ENCODE measurements at regions of chr7 and their contacts with region 1.

Region 1: DNA sequence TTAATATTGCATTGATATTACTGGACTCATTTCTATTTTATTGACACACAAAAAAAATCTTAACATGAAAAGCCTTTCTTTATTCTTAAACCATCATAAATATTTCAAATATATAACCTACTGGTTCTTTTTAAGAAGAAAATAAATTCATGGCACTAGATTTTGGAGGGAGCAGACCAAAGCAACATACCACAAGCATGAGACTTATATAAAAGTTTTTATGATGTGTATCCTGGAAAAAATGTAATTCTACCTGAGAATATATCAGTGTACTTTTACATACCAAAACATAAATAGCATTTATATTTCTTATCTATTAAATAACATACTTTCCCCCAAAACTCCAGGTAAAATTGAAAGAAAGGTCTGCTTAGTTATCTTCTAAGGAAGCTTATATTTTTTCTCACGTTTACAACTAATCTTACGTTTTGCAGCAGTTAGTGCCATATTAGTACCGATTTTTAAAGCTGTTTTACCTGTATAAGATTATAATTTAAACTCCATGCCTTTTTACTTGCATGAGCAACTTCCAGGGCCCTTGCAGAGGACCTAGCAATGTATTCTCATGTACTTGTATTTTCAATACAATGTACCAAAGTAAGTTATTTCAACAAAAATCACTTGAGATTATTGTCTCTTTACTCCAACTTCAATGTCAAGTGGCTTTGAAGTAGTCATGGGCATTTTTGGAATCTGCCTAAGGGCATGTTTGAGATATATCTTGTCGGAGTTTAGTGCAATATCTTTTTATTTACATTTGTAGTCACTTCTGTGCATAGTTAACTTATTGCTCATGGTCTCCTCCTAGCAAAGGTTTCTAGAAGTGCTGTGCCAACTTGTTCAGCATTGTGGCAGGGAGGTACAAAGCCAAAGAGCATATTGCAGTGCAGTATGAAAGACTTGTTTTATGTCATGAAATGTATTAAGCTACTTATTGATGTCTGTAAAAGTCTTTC is 508.5 kb upstream of the SEMA3D start:
- DNase-seq: peak; percentile 31 to 64
- H3K4me3 ChIP-seq: no peak overlapping the region
- H3K27ac ChIP-seq: no peak overlapping the region
- H3K4me1 ChIP-seq: peaks cover 13% of the 10 kb centered on the region
- H3K27me3 ChIP-seq: no peaks in the 10 kb centered on the region
- CTCF ChIP-seq: no peak

Region 2: GRCh38 chr7:87219545-87220025 is 1524.3 kb after region 1 on chr7 and contains the start of gene TMEM243:
- CTCF ChIA-PET with region 1: no interaction called
- POLR2A ChIA-PET with region 1: no interaction called
- intact Hi-C with region 1: loop called (anchors 5 kb)
- DNase-seq: peak; percentile 57 to 64
- H3K4me3 ChIP-seq: peak within 1 kb of the TSS; percentile 94
- H3K27ac ChIP-seq: peak within 1 kb of the TSS; percentile 36
- H3K4me1 ChIP-seq: peaks cover 20% of the 10 kb centered on the region
- H3K27me3 ChIP-seq: no peaks in the 10 kb centered on the region
- CTCF ChIP-seq: no peak
- total RNA-seq, gene TMEM243: 24.6 and 26.5 TPM in 2 replicates